Activated T-helper 1 cell treated with anti-CD3 and anti-CD28 coated beads, Interleukin-12 subunit alpha, Interleukin-12 subunit beta, Interleukin-2, Interleukin-4 antibody, amounts not matched to agents 30 ng/mL and 10 ng/mL and 1 ng/mL, durations not matched to agents 14 hours and 24 hours and 36 hours (primary cell): ENCODE measurements at regions of chr14 and their contacts with region 1.

Region 1: DNA sequence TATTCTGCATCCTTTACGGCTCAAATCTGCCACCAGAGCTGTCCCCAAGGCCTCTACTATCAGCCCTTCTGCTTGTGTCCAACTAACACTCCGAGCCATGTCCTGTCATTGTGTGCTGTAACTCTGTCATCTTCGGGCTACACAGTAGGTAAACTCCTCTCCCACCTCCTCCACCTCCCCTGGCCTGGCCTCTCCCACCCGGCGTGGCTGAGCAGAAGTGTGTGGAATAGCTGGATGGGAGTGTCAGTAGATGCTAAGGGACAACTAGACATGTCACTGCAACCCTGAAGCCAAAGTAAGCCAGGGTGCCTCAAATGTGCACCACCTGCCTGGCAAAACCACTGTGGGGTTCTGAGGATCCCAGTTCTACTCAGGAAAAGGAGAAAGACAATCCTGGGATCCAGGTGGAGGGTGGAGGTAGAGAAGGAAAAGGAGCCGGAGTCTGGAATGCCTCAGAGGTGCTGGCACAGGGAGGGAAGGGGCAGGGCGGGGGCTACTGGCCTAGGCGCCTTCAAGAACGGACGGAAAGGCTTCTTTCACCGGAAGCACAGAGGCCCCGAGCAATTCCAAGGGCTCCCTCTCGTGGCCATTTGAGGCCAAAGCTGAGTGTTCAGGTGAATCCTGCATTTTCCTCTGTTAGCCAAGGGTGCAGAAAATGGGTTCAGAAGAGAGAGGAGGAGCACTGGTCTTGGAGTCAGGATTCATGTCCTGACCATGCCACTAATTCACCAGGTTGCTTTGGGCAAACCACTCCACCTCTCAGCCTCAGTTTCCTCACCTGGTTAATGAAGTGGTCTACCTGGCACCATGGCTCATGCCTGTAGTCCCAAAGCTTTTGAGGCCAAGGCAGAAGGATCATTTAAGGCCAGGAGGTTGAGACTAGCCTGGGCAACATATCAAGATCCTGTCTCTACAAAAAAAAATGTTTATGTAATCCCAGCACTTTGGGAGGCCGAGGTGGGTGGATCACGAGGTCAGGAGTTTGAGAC is 20.5 kb upstream of the FAM181A start:
- DNase-seq: peak; percentile 40
- H3K4me3 Mint-ChIP-seq: no peak overlapping the region
- H3K27ac Mint-ChIP-seq: no peak overlapping the region
- H3K4me1 Mint-ChIP-seq: no peaks in the 10 kb centered on the region
- H3K27me3 Mint-ChIP-seq: peaks cover 20% of the 10 kb centered on the region

Region 2: GRCh38 chr14:93655078-93655750 is 251.4 kb before region 1 on chr14:
- intact Hi-C with region 1: loop called (anchors 1 kb)
- DNase-seq: no peak
- H3K4me3 Mint-ChIP-seq: no peak overlapping the region
- H3K27ac Mint-ChIP-seq: no peak overlapping the region
- H3K4me1 Mint-ChIP-seq: no peaks in the 10 kb centered on the region
- H3K27me3 Mint-ChIP-seq: peaks cover 8% of the 10 kb centered on the region

Region 3: GRCh38 chr14:93824518-93825234 is 82.0 kb before region 1 on chr14:
- intact Hi-C with region 1: no loop called
- DNase-seq: no peak
- H3K4me3 Mint-ChIP-seq: no peak overlapping the region
- H3K27ac Mint-ChIP-seq: no peak overlapping the region
- H3K4me1 Mint-ChIP-seq: no peaks in the 10 kb centered on the region
- H3K27me3 Mint-ChIP-seq: peaks cover 7% of the 10 kb centered on the region